GM18951 (cell line): ENCODE measurements at regions of chr7 and their contacts with region 1.

Region 1: DNA sequence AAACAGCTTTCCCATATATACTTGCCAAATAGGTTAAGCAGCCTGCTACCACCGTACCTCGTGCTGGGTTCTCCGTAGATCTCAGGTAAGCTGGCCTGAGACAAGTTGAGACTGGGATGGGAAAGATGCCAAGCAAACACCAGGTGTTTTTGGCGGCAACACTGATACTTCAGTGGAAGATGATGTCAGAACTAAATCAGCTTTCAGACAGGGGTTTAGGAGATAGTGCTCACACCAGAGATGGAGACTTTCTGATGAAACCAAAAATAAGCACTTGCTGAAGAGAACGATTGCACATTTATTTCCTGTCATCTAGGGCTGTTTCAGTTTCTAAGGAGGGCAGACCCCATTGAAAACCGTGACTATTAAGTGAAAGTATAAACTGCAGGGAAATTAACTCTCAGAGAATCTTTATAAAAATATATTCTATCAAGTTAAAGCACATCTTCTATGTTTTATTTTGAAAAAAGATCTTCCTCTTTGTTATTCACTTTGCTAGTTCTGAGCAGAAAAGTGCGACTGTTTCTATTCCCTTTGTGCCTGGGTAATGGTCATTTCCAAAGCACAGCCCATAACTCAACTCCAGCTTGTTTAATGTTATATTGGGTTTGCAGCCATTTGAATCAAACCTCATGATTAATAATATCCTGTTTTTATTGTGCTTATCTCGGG is 149.9 kb downstream of the CPED1 start:
- POLR2A ChIP-seq: no peak

Region 2: DNA sequence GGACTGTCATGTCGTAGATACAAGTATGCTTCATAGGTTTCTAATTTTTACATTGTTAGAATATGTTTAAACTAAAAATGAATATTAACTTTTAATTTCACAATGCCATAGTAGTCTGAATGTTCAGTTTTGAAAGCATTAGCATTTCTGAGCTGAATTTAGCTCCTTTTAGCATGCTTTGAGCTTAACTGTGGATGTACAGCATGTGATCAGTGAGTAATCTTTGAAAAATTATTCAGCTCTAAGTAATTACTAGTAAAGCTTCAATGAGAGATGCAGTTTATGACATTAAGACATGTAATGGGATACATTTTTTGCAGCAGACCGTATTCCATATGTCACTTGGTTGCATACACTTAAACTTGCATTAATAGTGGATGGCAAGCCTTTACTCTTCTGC is 76.3 kb after region 1 on chr7:
- in situ Hi-C with region 1: no loop called
- POLR2A ChIP-seq: no peak

Region 3: DNA sequence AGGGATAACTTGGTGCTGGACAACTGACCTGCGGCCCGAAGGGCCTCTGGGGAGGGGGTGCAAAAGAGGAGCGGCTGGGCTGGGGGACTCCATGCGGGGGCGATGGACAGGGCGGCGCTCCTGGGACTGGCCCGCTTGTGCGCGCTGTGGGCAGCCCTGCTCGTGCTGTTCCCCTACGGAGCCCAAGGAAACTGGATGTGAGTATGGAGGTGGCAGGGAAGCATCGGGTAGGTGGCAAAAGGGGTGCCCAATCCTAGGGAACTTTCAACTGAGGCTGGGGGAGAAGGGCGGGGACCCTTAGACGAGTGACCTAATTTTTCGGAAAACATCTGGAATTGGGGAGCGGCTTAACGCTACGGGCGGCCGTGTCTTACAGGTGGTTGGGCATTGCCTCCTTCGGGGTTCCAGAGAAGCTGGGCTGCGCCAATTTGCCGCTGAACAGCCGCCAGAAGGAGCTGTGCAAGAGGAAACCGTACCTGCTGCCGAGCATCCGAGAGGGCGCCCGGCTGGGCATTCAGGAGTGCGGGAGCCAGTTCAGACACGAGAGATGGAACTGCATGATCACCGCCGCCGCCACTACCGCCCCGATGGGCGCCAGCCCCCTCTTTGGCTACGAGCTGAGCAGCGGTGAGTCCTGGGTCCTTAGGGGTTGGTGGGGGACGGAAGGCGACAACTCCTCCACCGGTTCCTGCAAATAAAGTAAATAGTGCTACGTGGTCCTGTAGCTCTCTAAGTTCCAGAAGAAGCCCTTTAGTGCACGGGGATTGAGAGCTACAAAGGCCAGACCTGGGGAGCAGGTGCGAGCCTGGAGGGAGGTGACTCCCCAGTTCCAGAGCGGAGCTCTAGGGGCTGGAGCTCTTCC is 191.0 kb after region 1 on chr7:
- in situ Hi-C with region 1: loop called (anchors 25 kb)
- POLR2A ChIP-seq: no peak

Region 4: GRCh38 chr7:121547544-121548092 is 409.2 kb after region 1 on chr7:
- in situ Hi-C with region 1: loop called (anchors 25 kb)
- POLR2A ChIP-seq: no peak